ENCODE measurements at regions of chr6 and their contacts with region 1.

Region 1: DNA sequence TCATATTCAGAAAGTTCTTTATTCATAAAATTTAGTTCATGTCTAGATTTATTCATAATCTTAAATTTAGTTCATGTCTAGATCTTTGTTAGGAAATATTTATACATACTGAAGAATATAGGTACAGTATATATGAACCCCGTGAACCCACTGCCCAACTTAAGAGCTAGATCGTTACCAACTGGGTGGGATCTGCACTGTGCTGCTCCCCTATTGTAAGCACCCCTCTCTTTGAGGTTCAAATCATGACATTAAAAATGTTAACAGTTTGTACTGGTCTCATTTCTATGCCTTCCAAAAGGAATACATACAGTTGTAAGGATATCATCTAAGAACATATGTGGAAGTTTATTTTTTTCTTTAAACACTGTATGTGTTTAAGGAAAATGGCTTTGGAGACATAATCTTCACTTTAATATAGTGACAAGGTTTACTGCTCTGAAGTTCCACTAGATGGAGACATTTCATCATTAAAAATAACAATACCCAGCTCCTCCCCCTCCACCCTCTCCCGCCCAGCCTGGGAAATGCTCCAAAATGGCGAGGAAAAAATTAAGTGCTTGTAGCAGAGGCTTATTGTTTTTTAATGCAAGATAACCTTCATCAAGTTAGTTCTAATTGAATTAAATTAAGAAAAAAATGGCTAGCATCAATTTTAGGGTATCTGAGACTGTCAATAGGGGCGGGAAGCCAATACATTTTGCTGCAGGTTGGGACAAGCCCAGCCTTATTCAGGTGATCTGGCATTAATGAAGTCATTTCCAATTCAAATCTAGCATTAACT is 104.1 kb upstream of the TRAF3IP2 start:
- DNase-seq: peak; percentile 33
- ATAC-seq: peak; percentile 97
- H3K4me3 ChIP-seq: no peak overlapping the region
- H3K27ac ChIP-seq: peak overlapping the region; percentile 13; the same call in 1 of the 2 replicates
- H3K4me1 ChIP-seq: peaks cover 5% of the 10 kb centered on the region; the same call in 1 of the 2 replicates
- H3K27me3 ChIP-seq: no peaks in the 10 kb centered on the region
- CTCF ChIP-seq: peak; percentile 45 to 76 (median 62); a peak in 4 of 6 replicates
- EP300 ChIP-seq: no peak
- POLR2A ChIP-seq: no peak
- RAD21 ChIP-seq: peak; percentile 91

Region 2: GRCh38 chr6:111721753-111722154 is 11.9 kb after region 1 on chr6:
- CTCF ChIA-PET with region 1: interaction called, 30 read pairs
- POLR2A ChIA-PET with region 1: no interaction called
- RAD21 ChIA-PET with region 1: interaction called, 18 read pairs
- SMC1A ChIA-PET with region 1: interaction called, 49 read pairs
- in situ Hi-C with region 1: no loop called
- intact Hi-C with region 1: no loop called
- DNase-seq: no peak
- ATAC-seq: peak; percentile 28
- H3K4me3 ChIP-seq: no peak overlapping the region
- H3K27ac ChIP-seq: no peak overlapping the region
- H3K4me1 ChIP-seq: peaks cover 40% of the 10 kb centered on the region
- H3K27me3 ChIP-seq: no peaks in the 10 kb centered on the region
- CTCF ChIP-seq: peak; percentile 50 to 68 (median 67)
- EP300 ChIP-seq: no peak
- POLR2A ChIP-seq: no peak
- RAD21 ChIP-seq: peak; percentile 75

Region 3: GRCh38 chr6:111750753-111751684 is 41.2 kb after region 1 on chr6:
- CTCF ChIA-PET with region 1: interaction called, 4 read pairs
- POLR2A ChIA-PET with region 1: interaction called, 3 read pairs
- RAD21 ChIA-PET with region 1: interaction called, 13 read pairs
- SMC1A ChIA-PET with region 1: interaction called, 14 read pairs
- in situ Hi-C with region 1: no loop called
- intact Hi-C with region 1: no loop called
- DNase-seq: no peak
- ATAC-seq: peak; percentile 83
- H3K4me3 ChIP-seq: no peak overlapping the region
- H3K27ac ChIP-seq: peak overlapping the region; percentile 85
- H3K4me1 ChIP-seq: peaks cover 69% of the 10 kb centered on the region
- H3K27me3 ChIP-seq: no peaks in the 10 kb centered on the region
- CTCF ChIP-seq: no peak
- EP300 ChIP-seq: peak; percentile 27 to 70; a peak in 2 of 4 replicates
- POLR2A ChIP-seq: no peak
- RAD21 ChIP-seq: peak; percentile 19; the same call in 1 of the 2 replicates

Region 4: GRCh38 chr6:111804627-111805235 is 94.9 kb after region 1 on chr6:
- CTCF ChIA-PET with region 1: interaction called, 7 read pairs
- POLR2A ChIA-PET with region 1: no interaction called
- RAD21 ChIA-PET with region 1: interaction called, 6 read pairs
- SMC1A ChIA-PET with region 1: interaction called, 10 read pairs
- in situ Hi-C with region 1: no loop called
- intact Hi-C with region 1: no loop called
- DNase-seq: peak; percentile 84
- ATAC-seq: peak; percentile 77
- H3K4me3 ChIP-seq: no peak overlapping the region
- H3K27ac ChIP-seq: peak overlapping the region; percentile 70
- H3K4me1 ChIP-seq: peaks cover 70% of the 10 kb centered on the region
- H3K27me3 ChIP-seq: no peaks in the 10 kb centered on the region
- CTCF ChIP-seq: peak in 2 of 3 experiments; percentile 24 to 35; a peak in 2 of 6 replicates
- EP300 ChIP-seq: peak; percentile 65 to 88; a peak in 2 of 4 replicates
- POLR2A ChIP-seq: no peak
- RAD21 ChIP-seq: peak; percentile 62

Region 5: DNA sequence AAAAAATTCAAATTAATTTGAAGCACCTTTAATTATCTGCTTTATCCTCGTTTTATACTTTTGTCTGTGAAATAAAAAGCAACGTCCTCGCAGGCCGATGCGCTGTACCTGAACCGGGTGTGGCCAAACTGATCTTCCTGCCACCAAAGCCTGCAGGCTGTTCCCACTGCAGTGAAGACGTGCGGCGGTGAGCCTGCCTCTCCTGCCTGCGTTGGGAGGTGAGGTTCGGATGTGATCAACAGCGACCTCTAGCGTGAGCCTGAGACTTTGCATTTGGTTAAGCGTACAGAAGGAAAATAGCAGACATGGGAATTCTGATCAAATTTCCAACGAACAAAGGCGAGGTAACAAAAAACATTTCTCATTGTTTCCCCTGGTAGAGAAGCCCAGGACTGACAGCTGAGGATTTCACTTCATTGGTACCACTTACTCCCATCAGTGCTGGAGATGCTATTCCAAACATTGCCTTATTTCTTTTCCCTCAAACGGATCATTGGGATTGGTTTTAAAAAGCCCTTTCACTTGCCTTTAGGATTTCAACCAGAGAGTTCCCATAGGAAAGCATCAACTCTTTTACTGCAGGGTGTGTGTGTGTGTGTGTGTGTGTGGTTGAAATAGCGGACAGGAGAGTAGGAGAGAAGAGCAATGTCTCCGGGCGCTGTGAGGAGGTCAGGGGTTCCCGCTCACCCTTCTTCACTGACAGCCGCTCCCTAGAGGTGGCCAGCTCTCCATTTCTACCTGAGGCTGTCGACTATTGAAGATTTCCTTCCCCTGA is 287.5 kb after region 1 on chr6:
- CTCF ChIA-PET with region 1: interaction called, 88 read pairs
- POLR2A ChIA-PET with region 1: no interaction called
- RAD21 ChIA-PET with region 1: interaction called, 15 read pairs
- SMC1A ChIA-PET with region 1: interaction called, 29 read pairs
- in situ Hi-C with region 1: loop called (anchors 5 kb)
- intact Hi-C with region 1: loop called (anchors 1 kb)
- DNase-seq: no peak
- ATAC-seq: peak; percentile 85
- H3K4me3 ChIP-seq: no peak overlapping the region
- H3K27ac ChIP-seq: no peak overlapping the region
- H3K4me1 ChIP-seq: peaks cover 28% of the 10 kb centered on the region
- H3K27me3 ChIP-seq: no peaks in the 10 kb centered on the region
- CTCF ChIP-seq: peak; percentile 85 to 95 (median 93); a peak in 5 of 6 replicates
- EP300 ChIP-seq: no peak
- POLR2A ChIP-seq: no peak
- RAD21 ChIP-seq: peak; percentile 99

Region 6: GRCh38 chr6:112163295-112164257 is 453.8 kb after region 1 on chr6:
- CTCF ChIA-PET with region 1: interaction called, 5 read pairs
- POLR2A ChIA-PET with region 1: no interaction called
- RAD21 ChIA-PET with region 1: interaction called, 5 read pairs
- SMC1A ChIA-PET with region 1: interaction called, 4 read pairs
- in situ Hi-C with region 1: loop called (anchors 5 kb)
- intact Hi-C with region 1: loop called (anchors 5 kb)
- DNase-seq: peak; percentile 7
- ATAC-seq: peak; percentile 100
- H3K4me3 ChIP-seq: no peak overlapping the region
- H3K27ac ChIP-seq: no peak overlapping the region
- H3K4me1 ChIP-seq: peaks cover 3% of the 10 kb centered on the region; the same call in 1 of the 2 replicates
- H3K27me3 ChIP-seq: peaks cover 3 to 14% of the 10 kb centered on the region in 2 experiments
- CTCF ChIP-seq: peak; percentile 82 to 96 (median 96)
- EP300 ChIP-seq: no peak
- POLR2A ChIP-seq: no peak
- RAD21 ChIP-seq: peak; percentile 90